Activated T-helper 1 cell treated with anti-CD3 and anti-CD28 coated beads, Interleukin-12 subunit alpha, Interleukin-12 subunit beta, Interleukin-2, Interleukin-4 antibody, amounts not matched to agents 30 ng/mL and 10 ng/mL and 1 ng/mL, durations not matched to agents 14 hours and 24 hours and 36 hours (primary cell): ENCODE measurements at regions of chr5 and their contacts with region 1.

Region 1: DNA sequence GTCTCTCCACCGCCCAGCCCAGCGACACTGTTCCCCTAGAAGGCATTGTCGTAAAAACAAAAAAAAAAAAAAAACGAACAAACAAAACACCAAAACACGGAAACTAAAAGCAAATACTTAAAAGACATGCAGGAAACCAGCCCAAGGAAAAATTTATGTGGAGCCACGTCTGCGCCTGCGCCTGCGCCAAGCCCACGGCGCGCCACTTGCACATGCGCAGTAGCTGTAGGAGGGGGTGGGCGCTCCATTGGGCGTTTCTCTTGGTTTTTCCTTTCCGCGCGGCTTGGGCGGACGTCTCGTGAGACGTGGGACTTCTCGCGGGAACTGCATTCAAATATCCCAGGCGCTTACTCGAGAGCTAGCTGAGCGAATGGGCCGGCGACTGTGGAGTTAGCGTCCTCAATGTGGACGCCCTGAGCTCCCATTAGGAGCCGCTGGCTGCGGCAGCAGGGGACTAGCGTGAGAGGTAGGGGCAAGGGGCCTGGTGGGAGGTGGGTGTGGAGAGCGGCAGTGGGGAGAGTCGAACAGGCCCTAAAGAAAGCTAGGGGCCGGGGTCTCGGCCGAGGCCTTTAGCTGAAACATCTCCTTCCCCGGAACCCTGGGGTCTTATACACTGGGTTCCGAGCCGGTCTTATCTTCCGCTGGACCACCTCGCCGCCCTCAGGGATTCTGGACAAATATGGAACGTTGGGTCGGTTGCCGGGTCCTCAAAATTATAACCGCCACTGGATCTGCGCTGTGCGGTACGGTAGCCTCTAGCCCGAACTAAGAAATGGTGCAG is at the start of gene SPDL1:
- DNase-seq: peak; percentile 94
- H3K4me3 Mint-ChIP-seq: peak within 1 kb of the TSS; percentile 98
- H3K27ac Mint-ChIP-seq: peak within 1 kb of the TSS; percentile 85
- H3K4me1 Mint-ChIP-seq: peaks cover 46% of the 10 kb centered on the region
- H3K27me3 Mint-ChIP-seq: peaks cover 7% of the 10 kb centered on the region
- total RNA-seq, gene SPDL1: 34.1 and 41.0 TPM in 2 replicates

Region 2: GRCh38 chr5:168268949-168269943 is 1314.4 kb before region 1 on chr5:
- intact Hi-C with region 1: loop called (anchors 10 kb)
- DNase-seq: peak; percentile 48
- H3K4me3 Mint-ChIP-seq: no peak overlapping the region
- H3K27ac Mint-ChIP-seq: no peak overlapping the region
- H3K4me1 Mint-ChIP-seq: peaks cover 6% of the 10 kb centered on the region
- H3K27me3 Mint-ChIP-seq: peaks cover 17% of the 10 kb centered on the region

Region 3: GRCh38 chr5:168679515-168679920 is 904.1 kb before region 1 on chr5:
- intact Hi-C with region 1: loop called (anchors 1 kb)
- DNase-seq: peak; percentile 22
- H3K4me3 Mint-ChIP-seq: no peak overlapping the region
- H3K27ac Mint-ChIP-seq: no peak overlapping the region
- H3K4me1 Mint-ChIP-seq: peaks cover 7% of the 10 kb centered on the region
- H3K27me3 Mint-ChIP-seq: no peaks in the 10 kb centered on the region

Region 4: GRCh38 chr5:169302491-169303118 is 281.0 kb before region 1 on chr5:
- intact Hi-C with region 1: loop called (anchors 5 kb)
- DNase-seq: peak; percentile 15
- H3K4me3 Mint-ChIP-seq: no peak overlapping the region
- H3K27ac Mint-ChIP-seq: no peak overlapping the region
- H3K4me1 Mint-ChIP-seq: peaks cover 9% of the 10 kb centered on the region
- H3K27me3 Mint-ChIP-seq: peaks cover 42% of the 10 kb centered on the region

Region 5: GRCh38 chr5:169534311-169534880 is 49.2 kb before region 1 on chr5:
- intact Hi-C with region 1: no loop called
- DNase-seq: no peak
- H3K4me3 Mint-ChIP-seq: no peak overlapping the region
- H3K27ac Mint-ChIP-seq: no peak overlapping the region
- H3K4me1 Mint-ChIP-seq: no peaks in the 10 kb centered on the region
- H3K27me3 Mint-ChIP-seq: peaks cover 15% of the 10 kb centered on the region

Region 6: GRCh38 chr5:169554251-169554650 is 29.4 kb before region 1 on chr5:
- intact Hi-C with region 1: no loop called
- DNase-seq: no peak
- H3K4me3 Mint-ChIP-seq: no peak overlapping the region
- H3K27ac Mint-ChIP-seq: no peak overlapping the region
- H3K4me1 Mint-ChIP-seq: no peaks in the 10 kb centered on the region
- H3K27me3 Mint-ChIP-seq: peaks cover 44% of the 10 kb centered on the region

Region 7: GRCh38 chr5:169650701-169651331 is 67.2 kb after region 1 on chr5:
- intact Hi-C with region 1: loop called (anchors 1 kb)
- DNase-seq: peak; percentile 37
- H3K4me3 Mint-ChIP-seq: peak overlapping the region; percentile 72
- H3K27ac Mint-ChIP-seq: peak overlapping the region; percentile 99
- H3K4me1 Mint-ChIP-seq: peaks cover 99% of the 10 kb centered on the region
- H3K27me3 Mint-ChIP-seq: no peaks in the 10 kb centered on the region

Region 8: DNA sequence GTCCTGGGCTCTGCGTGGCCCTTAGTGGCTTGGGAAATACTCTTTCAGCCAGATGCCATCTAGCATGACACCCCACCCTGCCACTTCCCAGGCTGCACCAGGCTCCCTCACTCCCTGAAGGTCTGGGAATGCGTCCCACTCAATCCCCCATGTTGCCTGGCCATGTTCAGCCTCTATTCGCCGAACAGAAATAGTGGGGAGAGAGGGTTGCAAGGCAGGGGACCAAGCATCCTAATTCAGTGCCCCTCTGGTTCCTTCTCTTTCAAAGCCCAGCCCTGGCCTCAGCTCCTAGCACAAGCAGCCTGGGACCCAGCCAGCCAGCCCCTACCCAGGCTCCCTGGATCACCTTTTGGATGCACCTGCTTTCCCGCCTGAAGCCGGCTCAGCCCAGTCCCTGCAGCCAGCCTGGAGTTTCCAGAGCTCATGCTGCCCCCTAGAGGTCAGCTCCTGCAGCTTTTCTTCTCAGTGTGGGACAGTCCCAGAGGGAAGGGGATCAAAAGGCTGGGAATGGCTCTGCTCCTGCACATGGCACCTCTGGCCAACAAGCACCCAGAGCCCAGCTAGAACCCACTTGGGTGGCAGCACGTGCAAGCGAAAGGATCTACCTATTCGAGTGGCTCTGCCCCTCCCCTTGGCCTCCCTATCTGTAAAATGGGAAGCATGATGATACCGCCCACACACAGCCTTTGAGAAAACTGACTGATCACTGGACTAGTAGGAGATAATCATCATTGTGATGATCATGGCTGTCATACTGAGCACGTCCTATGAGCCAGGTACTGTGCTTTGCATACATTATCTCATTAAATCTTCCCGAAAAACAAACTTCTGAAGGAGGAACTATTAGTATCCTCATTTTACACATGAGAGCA is 600.4 kb after region 1 on chr5:
- intact Hi-C with region 1: loop called (anchors 5 kb)
- DNase-seq: peak; percentile 15
- H3K4me3 Mint-ChIP-seq: no peak overlapping the region
- H3K27ac Mint-ChIP-seq: no peak overlapping the region
- H3K4me1 Mint-ChIP-seq: no peaks in the 10 kb centered on the region
- H3K27me3 Mint-ChIP-seq: peaks cover 5% of the 10 kb centered on the region